Mammary epithelial cell (primary cell): ENCODE measurements at regions of chr2 and their contacts with region 1.

Region 1: DNA sequence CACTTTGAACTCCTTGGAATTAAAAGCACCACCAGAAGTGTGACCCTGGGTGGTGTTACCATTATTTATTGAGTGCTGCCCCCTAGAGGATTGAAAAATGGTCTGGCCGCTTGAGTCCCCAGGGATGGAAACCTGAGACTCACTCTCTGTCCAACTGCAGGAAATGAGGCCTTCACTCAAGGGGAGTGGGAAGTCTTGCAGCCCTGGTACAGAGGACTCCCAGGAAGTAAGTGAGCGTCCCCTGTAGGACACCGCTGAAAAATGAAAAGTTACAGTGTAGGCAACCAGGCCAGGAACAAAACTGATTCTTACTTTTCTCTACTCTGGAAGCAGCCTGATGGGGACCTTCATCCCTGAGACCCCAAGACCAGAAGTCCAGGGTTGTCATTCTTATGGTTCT is 2.2 kb upstream of the NRP2 start:
- DNase-seq: peak; percentile 77
- H3K4me3 ChIP-seq: no peak overlapping the region
- H3K27ac ChIP-seq: peak overlapping the region; percentile 93
- H3K4me1 ChIP-seq: peaks cover 60% of the 10 kb centered on the region
- H3K27me3 ChIP-seq: no peaks in the 10 kb centered on the region
- CTCF ChIP-seq: peak; percentile 69 to 75

Region 2: GRCh38 chr2:204691911-204692510 is 988.1 kb before region 1 on chr2:
- CTCF ChIA-PET with region 1: no interaction called
- dilution Hi-C with region 1: no loop called
- in situ Hi-C with region 1: no loop called
- intact Hi-C with region 1: loop called (anchors 5 kb)
- DNase-seq: peak; percentile 57
- H3K4me3 ChIP-seq: no peak overlapping the region
- H3K27ac ChIP-seq: no peak overlapping the region
- H3K4me1 ChIP-seq: no peaks in the 10 kb centered on the region
- H3K27me3 ChIP-seq: no peaks in the 10 kb centered on the region
- CTCF ChIP-seq: peak; percentile 84 to 85

Region 3: DNA sequence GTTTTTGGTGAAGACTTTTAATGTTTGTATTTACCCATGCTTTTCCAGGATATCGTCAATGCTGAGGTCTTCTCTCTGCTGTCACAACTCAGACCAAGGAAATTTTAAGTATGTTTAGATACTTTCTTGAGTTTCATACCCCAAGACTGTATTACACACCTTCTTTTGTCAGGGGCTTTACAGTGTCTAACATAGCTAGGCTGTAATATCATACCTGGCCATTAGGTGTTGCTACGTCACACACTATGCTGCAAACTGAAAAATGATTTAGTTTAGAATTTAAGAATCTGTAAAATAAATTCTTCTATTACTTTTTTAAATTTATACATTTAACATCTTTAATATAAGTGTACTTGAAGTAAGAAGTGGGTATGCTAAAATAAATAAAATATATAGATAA is 356.1 kb before region 1 on chr2:
- CTCF ChIA-PET with region 1: interaction called, 8 read pairs
- dilution Hi-C with region 1: no loop called
- in situ Hi-C with region 1: loop called (anchors 5 to 10 kb)
- intact Hi-C with region 1: loop called (anchors 1 kb)
- DNase-seq: peak; percentile 4
- H3K4me3 ChIP-seq: no peak overlapping the region
- H3K27ac ChIP-seq: no peak overlapping the region
- H3K4me1 ChIP-seq: no peaks in the 10 kb centered on the region
- H3K27me3 ChIP-seq: no peaks in the 10 kb centered on the region
- CTCF ChIP-seq: peak; percentile 78 to 87

Region 4: DNA sequence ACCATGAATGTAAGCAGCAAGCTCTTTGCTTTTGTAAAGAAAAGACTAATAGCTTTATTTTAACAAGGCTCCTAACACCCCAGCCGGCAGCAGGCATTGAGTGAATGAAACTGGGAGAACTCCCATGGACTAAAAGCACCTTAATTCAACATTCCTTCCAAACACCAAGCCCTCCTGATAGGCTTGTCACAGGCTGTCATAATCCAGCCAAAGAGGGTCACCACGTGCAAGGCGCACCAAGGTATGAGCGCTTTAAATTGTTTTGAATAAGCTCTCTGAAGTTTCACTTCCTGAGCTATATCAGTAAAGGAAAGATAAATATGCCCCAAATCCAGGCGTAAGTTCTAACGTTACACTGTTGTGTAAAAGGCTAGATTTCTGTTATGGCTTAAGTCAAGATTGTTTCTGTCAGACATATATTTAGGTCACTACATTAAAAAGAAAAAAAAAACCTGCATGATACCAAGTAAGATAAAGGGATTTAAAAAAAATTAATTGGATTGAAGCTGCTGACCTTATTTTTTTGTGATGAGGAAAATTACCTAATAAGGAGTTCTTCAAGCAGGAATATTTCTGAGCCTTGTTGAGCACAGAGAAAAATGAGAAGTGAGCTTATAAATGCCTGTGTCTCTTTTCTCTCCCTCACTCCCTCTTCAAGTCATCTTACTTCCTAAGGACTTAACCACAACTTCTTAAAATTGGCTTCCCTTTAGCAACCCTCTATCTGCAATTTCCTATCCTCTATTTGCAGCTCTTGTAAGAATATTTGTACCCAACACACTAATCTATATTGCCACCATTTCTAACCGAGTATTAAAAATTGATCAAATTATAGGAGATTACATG is 133.9 kb before region 1 on chr2:
- CTCF ChIA-PET with region 1: no interaction called
- dilution Hi-C with region 1: no loop called
- in situ Hi-C with region 1: no loop called
- intact Hi-C with region 1: loop called (anchors 5 kb)
- DNase-seq: no peak
- H3K4me3 ChIP-seq: no peak overlapping the region
- H3K27ac ChIP-seq: no peak overlapping the region
- H3K4me1 ChIP-seq: no peaks in the 10 kb centered on the region
- H3K27me3 ChIP-seq: no peaks in the 10 kb centered on the region
- CTCF ChIP-seq: no peak

Region 5: GRCh38 chr2:205748639-205749477 is 68.8 kb after region 1 on chr2:
- CTCF ChIA-PET with region 1: no interaction called
- dilution Hi-C with region 1: no loop called
- in situ Hi-C with region 1: no loop called
- intact Hi-C with region 1: loop called (anchors 2 kb)
- DNase-seq: peak; percentile 96
- H3K4me3 ChIP-seq: no peak overlapping the region
- H3K27ac ChIP-seq: peak overlapping the region; percentile 93
- H3K4me1 ChIP-seq: peaks cover 73% of the 10 kb centered on the region
- H3K27me3 ChIP-seq: no peaks in the 10 kb centered on the region
- CTCF ChIP-seq: no peak

Region 6: DNA sequence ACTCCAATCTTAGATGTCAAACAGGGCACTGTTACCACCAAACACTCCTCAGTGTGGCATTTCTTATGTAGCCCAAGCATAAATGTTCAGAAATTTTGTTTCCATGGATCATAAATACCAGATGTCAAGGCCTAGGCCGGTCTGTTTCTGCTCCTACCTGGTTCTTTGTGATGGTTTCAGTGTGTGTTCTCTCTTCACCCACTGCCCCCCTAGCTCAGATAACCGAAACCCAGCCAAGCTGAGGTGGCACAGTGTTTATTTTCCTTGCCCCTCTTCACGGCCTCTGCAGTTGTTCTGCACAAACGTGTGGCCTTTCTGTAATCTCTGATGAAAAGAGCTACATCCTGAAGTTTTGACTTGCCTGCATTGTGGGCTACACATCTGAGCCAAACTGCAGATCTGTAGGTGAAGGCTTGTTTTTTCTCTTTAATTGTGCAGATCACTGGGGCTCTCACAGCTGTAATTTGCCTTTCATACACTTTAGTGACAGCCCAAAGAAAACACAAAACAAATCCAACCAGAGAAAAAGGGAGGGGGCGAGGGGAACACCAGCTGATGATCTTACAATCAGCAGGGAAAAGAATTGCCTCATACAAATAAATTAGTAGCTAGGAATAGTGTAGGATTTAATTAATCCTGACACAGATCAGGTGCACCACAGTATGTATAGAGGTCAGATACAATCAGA is 101.3 kb after region 1 on chr2:
- CTCF ChIA-PET with region 1: no interaction called
- dilution Hi-C with region 1: no loop called
- in situ Hi-C with region 1: no loop called
- intact Hi-C with region 1: no loop called
- DNase-seq: no peak
- H3K4me3 ChIP-seq: no peak overlapping the region
- H3K27ac ChIP-seq: no peak overlapping the region
- H3K4me1 ChIP-seq: peaks cover 11% of the 10 kb centered on the region
- H3K27me3 ChIP-seq: no peaks in the 10 kb centered on the region
- CTCF ChIP-seq: no peak

Region 7: DNA sequence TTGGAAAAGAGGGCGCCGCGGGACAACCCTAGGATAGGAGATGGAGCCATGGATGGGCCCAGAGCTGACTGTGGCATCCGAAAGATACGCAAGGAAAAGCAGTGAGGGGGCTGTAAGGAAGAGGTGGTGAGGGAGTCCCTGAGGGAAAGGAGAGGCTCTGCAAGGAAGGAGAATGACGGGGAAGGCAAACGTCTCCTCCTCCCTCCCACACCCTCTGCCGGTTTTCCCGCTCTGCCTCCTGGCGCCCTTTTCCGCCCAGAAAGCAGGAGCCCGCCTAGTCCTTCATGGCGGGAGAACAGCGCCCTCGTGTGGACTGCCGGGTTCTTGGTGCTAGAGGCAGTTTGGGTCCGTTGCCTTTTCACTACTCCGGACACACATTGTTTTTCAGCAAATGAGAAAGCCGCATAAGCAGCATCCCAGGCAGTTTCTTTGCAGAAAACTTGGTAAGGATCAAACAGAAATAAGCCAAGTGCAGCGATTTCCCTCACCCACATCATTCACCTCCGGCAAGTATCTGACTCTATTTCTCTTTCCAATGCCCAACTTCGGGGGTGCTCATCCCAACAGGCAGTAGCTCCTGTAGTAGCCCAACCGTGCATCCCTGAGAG is 205.5 kb after region 1 on chr2:
- CTCF ChIA-PET with region 1: no interaction called
- dilution Hi-C with region 1: no loop called
- in situ Hi-C with region 1: no loop called
- intact Hi-C with region 1: loop called (anchors 2 kb)
- DNase-seq: peak; percentile 65
- H3K4me3 ChIP-seq: no peak overlapping the region
- H3K27ac ChIP-seq: no peak overlapping the region
- H3K4me1 ChIP-seq: peaks cover 17% of the 10 kb centered on the region
- H3K27me3 ChIP-seq: no peaks in the 10 kb centered on the region
- CTCF ChIP-seq: peak; percentile 63 to 72